Left ventricle myocardium superior (tissue), 1 donor: ENCODE measurements at regions of chr9 and their contacts with region 1.

Region 1: DNA sequence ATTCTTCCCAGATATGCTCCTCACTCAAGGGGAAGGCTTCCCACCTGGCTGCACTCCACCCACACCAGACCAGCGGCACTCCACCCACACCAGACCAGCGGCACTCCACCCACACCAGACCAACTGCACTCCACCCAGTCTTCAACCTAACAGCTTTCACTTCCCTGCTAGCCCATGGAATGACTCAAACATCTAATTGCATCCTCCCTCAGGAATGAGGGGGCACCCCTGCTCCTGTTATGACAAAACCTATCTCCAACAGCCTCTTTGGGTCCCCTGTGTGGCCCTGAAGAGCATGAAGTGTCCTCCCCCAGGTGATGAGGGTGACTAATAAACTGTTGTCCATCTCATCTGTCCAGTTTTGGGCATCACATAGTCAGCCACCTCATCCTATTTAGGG is 556.6 kb upstream of the TUSC1 start:
- DNase-seq: no peak
- ATAC-seq: no peak

Region 2: GRCh38 chr9:26292943-26293342 is 58.1 kb after region 1 on chr9:
- intact Hi-C with region 1: loop called (anchors 10 kb)
- DNase-seq: no peak
- ATAC-seq: no peak